ENCODE measurements at regions of chr1 and their contacts with region 1.

Region 1: GRCh38 chr1:243325305-243325890 is 69.6 kb downstream of the SDCCAG8 start:
- DNase-seq: no peak
- ATAC-seq: peak in 1 of 4 donors; percentile 29
- H3K4me3 ChIP-seq: no peak overlapping the region
- H3K27ac ChIP-seq: no peak overlapping the region
- H3K4me1 ChIP-seq: peaks cover 0 to 6% (median 0%) of the 10 kb centered on the region in 12 donors
- H3K27me3 ChIP-seq: no peaks in the 10 kb centered on the region
- CTCF ChIP-seq: peak; percentile 72 to 90 (median 83)
- POLR2A ChIP-seq: no peak

Region 2: DNA sequence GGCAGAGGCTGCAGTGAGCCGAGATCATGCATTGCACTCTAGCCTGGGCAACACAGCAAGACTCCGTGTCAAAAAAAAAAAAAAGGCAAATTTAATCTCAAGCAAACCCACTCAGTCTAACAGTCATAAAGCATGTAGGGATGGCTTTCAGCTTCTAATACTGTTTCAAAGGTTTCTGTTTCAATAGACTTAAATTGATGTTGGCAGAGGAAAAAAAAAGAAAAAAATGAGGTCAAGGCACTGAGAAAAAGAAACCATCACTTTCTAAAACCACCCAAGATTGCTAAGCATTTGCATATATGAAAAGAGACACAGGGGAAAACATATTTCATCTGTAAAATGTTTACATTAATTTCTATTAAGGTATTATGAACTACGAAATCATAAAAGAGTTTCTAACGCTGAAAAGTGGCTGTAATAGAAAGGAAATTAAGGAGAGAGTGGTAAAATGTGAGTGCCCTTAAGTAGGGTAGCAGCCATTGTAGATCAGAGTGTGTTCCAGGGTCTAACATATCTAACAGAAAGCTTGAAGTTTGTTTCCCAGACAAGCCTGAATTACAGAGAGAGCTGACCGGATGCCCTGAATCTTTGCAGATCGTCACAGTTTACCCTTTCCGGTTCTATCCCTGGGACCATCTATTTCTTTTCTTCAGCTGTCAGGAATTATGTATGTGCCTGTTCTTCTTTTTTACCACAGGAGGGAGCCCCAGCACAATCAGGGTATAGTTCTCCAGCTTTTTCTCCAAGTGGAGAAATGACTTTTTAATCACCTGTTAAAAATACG is 870.9 kb before region 1 on chr1:
- intact Hi-C with region 1: loop called in 3 of 10 experiments (anchors 5 to 10 kb)
- DNase-seq: no peak
- ATAC-seq: no peak
- H3K4me3 ChIP-seq: no peak overlapping the region
- H3K27ac ChIP-seq: no peak overlapping the region
- H3K4me1 ChIP-seq: no peaks in the 10 kb centered on the region
- H3K27me3 ChIP-seq: peaks cover 0 to 38% (median 0%) of the 10 kb centered on the region in 9 donors
- CTCF ChIP-seq: peak; percentile 38 to 72 (median 57)
- POLR2A ChIP-seq: no peak

Region 3: DNA sequence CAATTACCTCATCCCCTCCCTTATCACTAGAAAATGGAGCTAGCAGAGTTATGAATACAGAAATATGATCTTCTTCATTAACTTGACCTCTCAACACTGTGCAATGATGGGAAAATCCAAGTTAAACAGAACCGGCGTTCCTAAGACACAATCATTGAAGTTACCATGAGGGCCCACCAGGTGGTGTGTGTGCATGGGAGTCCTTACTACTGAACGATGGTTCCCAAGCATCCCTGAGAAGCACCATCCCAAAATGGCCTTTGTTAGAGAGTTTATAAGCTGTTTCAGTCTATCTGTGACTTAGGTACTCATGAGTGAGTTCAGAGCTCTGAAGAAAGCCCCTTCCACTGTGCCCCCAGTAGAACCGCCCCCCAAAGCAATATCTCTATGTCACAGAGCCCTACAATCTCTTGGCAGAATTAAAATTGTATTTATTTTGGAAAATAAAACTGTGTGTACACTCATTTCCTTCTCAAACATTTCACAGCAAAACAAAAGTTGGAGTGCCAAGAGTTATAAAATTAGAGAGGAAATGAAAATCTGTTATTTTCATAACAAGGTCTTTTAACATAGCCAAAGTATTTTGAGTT is 857.7 kb before region 1 on chr1:
- intact Hi-C with region 1: loop called in 6 of 10 experiments (anchors 5 to 10 kb)
- DNase-seq: peak in 4 of 5 donors; percentile 27 to 52 (median 39)
- ATAC-seq: peak in 3 of 4 donors; percentile 67 to 80 (median 75)
- H3K4me3 ChIP-seq: no peak overlapping the region
- H3K27ac ChIP-seq: no peak overlapping the region
- H3K4me1 ChIP-seq: no peaks in the 10 kb centered on the region
- H3K27me3 ChIP-seq: peaks cover 0 to 7% (median 0%) of the 10 kb centered on the region in 9 donors
- CTCF ChIP-seq: peak; percentile 30 to 73 (median 65)
- POLR2A ChIP-seq: no peak

Region 4: GRCh38 chr1:243229526-243229925 is 95.9 kb before region 1 on chr1:
- intact Hi-C with region 1: no loop called
- DNase-seq: no peak
- ATAC-seq: no peak
- H3K4me3 ChIP-seq: no peak overlapping the region
- H3K27ac ChIP-seq: no peak overlapping the region
- H3K4me1 ChIP-seq: peaks cover 0 to 33% (median 15%) of the 10 kb centered on the region in 12 donors
- H3K27me3 ChIP-seq: no peaks in the 10 kb centered on the region
- CTCF ChIP-seq: no peak
- POLR2A ChIP-seq: no peak